Breast epithelium (tissue), 4 donors: ENCODE measurements at regions of chr1 and their contacts with region 1.

Region 1: DNA sequence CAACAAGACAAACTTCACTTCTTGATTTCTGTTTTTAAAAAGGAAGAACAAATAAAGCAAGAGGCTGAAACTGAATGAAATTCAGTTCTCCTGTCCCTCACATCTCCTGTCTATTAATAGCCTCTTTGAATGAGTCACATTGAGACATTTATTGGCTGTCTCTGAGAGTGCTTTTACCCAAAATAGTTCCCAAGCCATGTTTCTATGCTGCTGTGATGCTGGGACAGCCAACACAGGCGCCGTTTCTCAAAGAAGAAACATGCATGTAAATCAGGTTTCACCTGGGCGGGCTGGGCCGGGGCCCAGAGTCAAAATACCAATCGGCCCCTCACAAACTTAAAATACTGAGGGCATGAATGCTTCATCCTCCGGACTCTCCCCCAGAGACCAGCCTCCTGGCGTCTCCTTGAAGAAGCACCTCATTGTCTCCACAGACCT is 105.2 kb downstream of the EDEM3 start:
- DNase-seq: no peak
- H3K4me3 ChIP-seq: no peak overlapping the region
- H3K27ac ChIP-seq: peak overlapping the region in 1 of 2 donors; percentile 32
- H3K4me1 ChIP-seq: no peaks in the 10 kb centered on the region
- H3K27me3 ChIP-seq: no peaks in the 10 kb centered on the region
- CTCF ChIP-seq: no peak
- POLR2A ChIP-seq: no peak

Region 2: GRCh38 chr1:184895086-184895485 is 245.6 kb after region 1 on chr1:
- intact Hi-C with region 1: loop called (anchors 5 kb)
- DNase-seq: no peak
- H3K4me3 ChIP-seq: no peak overlapping the region
- H3K27ac ChIP-seq: no peak overlapping the region
- H3K4me1 ChIP-seq: no peaks in the 10 kb centered on the region
- H3K27me3 ChIP-seq: no peaks in the 10 kb centered on the region
- CTCF ChIP-seq: no peak
- POLR2A ChIP-seq: no peak